ENCODE measurements at regions of chr12 and their contacts with region 1.

Region 1: DNA sequence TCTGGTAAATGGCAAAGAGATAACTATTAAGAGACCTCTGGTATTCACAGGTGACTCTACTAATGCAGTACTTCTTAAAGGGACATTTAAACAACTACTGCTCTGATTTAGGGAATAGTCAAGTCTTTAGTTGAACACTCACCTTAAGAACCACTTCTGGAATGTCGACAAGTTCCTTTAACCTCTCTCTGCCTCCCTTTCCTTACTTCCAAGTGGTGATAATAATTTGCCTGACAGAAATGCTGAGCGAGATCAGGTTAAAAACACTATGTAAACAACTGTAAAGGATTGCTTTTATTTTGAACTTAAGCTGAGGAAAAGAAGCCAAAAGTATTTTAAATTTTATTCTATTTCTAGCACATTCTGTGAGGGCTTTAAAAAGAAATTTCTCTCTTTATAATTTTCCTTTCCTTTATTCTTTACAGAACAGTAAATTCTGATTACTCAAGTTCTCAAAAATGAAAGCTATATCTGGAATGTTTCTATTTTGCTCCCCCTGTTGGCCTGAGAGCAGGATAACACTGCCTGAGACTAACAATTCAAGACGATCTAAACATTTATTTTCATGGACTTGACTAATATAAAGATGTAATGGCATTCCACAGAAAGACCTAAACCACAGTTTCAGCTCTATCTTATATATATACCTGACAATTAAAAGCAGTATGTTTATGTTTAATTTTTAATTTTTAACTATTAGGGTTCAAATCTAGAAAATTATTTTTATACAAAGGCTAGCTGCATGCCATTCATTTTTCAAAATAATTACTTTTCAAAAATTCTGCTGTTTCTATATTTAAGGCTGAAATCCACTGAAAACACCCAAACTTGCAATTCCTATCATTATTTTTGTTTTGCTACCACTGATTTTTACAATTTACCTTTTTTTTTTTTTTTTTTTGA is 29.2 kb downstream of the ZCCHC8 start:
- DNase-seq: peak; percentile 46
- H3K27ac ChIP-seq: peak overlapping the region; percentile 34
- CTCF ChIP-seq: peak; percentile 84

Region 2: DNA sequence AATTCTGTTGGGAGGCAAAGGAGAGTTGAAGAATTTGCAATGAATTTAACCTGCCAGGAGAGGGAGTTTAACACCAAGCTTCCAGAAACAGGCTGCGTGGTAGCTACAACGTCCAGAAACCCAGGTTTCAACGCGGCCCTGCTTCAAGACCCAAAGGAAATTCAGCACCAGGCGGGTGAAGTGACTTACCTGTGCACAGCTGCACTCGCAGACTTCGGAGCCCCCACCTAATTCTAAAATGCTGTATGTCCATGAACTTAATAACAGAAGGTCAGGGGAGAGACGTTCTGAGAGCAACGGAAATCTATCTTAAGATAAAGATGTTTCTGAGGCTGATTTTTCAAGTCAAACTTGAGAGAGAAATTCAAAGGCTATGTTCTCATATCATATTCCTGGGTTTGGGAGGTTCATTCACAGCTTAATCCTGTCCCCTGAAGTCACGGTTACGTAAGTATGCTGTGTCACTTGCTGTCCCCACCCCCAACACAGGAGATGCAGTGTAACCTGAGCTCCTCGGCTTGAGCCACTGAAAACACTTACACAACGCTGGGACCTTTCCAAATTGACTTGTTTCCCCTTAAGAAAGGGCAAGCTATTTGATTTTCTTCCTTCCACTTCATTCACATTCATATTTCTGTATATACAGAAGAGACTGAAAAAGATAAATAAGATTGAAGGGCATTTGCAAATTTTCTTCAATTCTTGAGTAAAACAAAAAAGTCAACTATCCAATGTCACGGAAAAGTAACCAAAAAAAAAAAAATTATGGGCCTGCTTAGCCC is 71.8 kb before region 1 on chr12:
- CTCF ChIA-PET with region 1: interaction called, 36 read pairs
- POLR2A ChIA-PET with region 1: interaction called, 4 read pairs
- DNase-seq: peak; percentile 68
- H3K27ac ChIP-seq: peak overlapping the region; percentile 98
- CTCF ChIP-seq: peak; percentile 73

Measured in RWPE1 (cell line).